ENCODE measurements at regions of chr19 and their contacts with region 1.

Region 1: DNA sequence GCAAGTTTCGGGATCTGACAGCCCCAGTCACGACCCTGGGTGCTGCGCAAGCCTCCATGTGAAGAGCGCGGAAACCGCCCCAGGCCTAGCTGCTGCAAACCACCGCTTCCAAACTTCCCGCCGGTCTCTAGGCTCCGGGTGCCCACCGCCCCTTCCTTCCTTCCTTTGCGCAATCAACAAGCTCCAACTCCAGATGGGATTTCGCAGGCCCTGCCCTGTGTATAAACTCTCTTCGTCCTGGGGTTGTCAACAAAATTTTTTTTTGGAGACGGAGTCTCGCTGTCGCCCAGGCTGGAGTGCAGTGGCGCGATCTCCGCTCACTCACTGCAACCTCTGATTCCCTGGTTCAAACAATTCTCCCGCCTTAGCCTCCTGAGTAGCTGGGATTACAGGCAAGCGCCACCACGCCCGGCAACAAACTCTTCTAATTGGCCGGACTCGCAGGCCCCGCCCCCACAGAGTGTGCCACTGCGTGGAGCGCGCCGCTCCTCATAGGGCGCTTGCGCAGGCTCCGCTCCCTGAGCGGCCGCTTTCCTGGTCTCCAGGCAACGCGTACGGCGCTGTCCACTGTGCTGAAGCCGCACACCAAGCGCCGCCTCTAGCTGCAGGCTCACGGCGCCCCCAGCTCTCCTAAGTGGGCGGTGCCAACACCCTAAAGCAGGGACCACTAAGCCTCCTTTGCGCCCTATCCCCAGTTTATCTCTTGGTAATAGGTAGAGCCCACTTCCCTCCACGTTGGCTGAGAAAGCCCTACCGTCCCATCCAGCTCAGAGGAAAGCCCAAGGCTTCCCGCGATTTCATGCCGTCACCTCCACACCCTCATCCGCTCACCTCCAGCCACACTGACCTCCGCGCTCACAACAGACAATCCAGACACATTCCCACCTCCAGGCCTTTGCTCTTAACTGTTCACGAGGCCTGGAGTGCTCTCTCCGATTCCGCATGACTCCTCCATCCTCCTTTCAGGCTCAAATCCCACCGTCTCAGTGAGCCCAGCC is 5.5 kb upstream of the QTRT1 start:
- DNase-seq: peak; percentile 85
- H3K4me3 ChIP-seq: no peak overlapping the region
- H3K27ac ChIP-seq: no peak overlapping the region
- H3K27me3 ChIP-seq: no peaks in the 10 kb centered on the region
- CTCF ChIP-seq: no peak

Region 2: DNA sequence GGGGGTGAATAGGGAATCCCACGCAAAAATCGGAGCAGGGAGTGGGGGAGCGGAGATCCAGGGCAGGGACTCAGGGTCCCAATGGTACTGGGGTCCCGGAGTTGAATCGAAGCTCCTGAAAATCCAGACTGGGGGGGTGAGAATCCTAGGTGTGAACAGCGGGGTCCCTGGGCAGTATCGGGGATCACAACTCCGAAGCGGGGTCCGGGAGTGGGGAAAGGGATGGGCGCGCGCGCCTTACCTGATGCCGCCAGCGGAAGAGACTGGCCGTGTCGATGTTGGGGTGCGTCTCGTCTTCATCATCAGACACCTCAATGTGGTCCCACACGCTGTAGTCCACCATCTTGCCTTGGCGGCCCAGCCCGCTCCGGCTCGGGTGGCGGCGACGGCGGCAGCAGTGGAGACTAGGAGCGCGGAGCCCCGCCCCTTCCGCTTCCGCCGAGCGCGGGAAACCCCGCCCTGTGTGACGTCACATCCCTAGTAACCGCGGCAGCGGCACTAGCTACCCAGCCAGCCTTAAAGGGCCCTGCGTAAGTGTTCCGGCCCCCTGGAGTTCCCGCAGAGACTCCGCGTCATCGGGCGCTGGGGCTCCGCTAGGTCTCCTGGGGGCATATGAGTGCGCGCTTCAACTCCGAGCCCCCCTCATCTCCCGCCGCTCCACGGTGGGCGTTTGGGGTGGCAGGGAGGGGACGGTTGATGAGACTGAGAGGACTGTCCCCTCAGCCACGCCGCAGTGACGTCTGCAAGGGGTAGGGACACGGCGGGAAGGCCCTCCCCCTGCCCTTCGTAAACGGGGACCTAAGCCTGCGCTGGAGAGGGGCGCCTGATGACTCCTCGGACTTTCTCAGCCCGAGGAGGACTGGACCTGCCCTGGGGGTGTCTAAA is 292.3 kb before region 1 on chr19 and contains the start of gene CDC37:
- CTCF ChIA-PET with region 1: interaction called, 23 read pairs
- POLR2A ChIA-PET with region 1: no interaction called
- DNase-seq: peak; percentile 91
- H3K4me3 ChIP-seq: peak within 1 kb of the TSS; percentile 99
- H3K27ac ChIP-seq: peak within 1 kb of the TSS; percentile 81
- H3K27me3 ChIP-seq: no peaks in the 10 kb centered on the region
- CTCF ChIP-seq: no peak
- polyA plus RNA-seq, gene CDC37: 268 and 340 TPM in 2 replicates

Region 3: DNA sequence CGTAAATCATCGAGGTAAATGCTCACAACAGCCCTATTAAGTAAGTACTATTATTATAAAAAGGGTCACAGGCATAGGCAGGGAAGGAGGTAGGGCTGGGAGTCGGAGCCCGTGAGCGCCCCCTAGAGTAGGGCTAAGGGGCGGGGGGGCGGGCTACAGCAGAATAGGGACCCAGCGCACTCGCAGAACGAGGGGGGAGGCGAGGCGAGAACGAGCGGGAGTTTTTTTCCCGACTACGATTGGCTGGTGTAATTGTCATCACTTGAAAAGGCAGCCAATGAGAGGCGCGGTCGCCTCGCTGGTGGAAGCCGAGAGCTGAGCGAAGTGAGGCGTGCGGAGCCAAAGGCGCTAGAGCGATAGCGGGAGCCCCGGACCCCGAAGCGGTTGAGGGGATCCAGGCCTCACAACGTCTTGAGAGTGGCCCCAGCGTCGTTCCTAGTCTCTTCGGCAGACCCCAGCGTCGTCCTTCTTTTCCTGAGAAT is 216.8 kb before region 1 on chr19:
- CTCF ChIA-PET with region 1: interaction called, 17 read pairs
- POLR2A ChIA-PET with region 1: no interaction called
- DNase-seq: peak; percentile 54
- H3K4me3 ChIP-seq: peak overlapping the region; percentile 48
- H3K27ac ChIP-seq: no peak overlapping the region
- H3K27me3 ChIP-seq: no peaks in the 10 kb centered on the region
- CTCF ChIP-seq: peak; percentile 40

Region 4: GRCh38 chr19:10644260-10645007 is 51.3 kb before region 1 on chr19:
- CTCF ChIA-PET with region 1: interaction called, 10 read pairs
- POLR2A ChIA-PET with region 1: no interaction called
- DNase-seq: peak; percentile 45
- H3K4me3 ChIP-seq: no peak overlapping the region
- H3K27ac ChIP-seq: no peak overlapping the region
- H3K27me3 ChIP-seq: no peaks in the 10 kb centered on the region
- CTCF ChIP-seq: peak; percentile 95

Region 5: DNA sequence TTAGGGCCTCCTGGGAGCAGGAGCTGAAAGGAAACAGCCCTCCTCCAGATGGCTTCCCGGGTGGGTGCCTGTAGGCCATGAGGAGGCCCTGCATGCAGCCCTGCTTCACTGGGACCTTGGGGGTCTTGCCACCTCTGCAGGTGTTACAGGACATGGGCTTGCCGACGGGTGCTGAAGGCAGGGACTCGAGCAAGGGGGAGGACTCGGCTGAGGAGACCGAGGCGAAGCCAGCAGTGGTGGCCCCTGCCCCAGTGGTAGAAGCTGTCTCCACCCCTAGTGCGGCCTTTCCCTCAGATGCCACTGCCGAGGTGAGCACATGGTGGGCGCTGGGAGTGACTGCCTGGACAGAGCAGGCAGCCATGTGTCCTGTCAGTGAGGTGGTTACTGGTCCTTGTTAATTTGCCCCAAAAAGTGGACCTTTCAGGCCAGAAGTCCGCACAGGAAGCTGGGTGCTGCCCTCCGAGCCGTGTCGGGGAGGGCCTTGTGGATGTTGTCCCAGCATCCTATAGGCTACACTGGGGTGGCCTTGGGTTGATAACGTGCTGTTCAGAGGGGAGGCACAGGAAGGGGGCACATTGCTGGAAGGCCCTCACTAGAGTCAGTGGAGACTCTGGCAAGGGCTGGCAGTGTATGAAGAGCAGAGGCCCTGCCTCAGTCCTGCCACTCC is 13.2 kb before region 1 on chr19:
- CTCF ChIA-PET with region 1: interaction called, 16 read pairs
- POLR2A ChIA-PET with region 1: no interaction called
- DNase-seq: no peak
- H3K4me3 ChIP-seq: no peak overlapping the region
- H3K27ac ChIP-seq: no peak overlapping the region
- H3K27me3 ChIP-seq: no peaks in the 10 kb centered on the region
- CTCF ChIP-seq: no peak